Activated B cell treated with CpG ODN at 0.5 μM for 24 hours (primary cell): ENCODE measurements at regions of chr3 and their contacts with region 1.

Region 1: GRCh38 chr3:157088601-157089454 is 71.1 kb downstream of the CCNL1 start:
- DNase-seq: peak; percentile 92
- ATAC-seq: peak; percentile 92
- H3K4me3 Mint-ChIP-seq: peak overlapping the region; percentile 90
- H3K27ac Mint-ChIP-seq: peak overlapping the region; percentile 90
- H3K4me1 Mint-ChIP-seq: peaks cover 26% of the 10 kb centered on the region
- H3K27me3 Mint-ChIP-seq: peaks cover 1% of the 10 kb centered on the region
- CTCF ChIP-seq: no peak

Region 2: DNA sequence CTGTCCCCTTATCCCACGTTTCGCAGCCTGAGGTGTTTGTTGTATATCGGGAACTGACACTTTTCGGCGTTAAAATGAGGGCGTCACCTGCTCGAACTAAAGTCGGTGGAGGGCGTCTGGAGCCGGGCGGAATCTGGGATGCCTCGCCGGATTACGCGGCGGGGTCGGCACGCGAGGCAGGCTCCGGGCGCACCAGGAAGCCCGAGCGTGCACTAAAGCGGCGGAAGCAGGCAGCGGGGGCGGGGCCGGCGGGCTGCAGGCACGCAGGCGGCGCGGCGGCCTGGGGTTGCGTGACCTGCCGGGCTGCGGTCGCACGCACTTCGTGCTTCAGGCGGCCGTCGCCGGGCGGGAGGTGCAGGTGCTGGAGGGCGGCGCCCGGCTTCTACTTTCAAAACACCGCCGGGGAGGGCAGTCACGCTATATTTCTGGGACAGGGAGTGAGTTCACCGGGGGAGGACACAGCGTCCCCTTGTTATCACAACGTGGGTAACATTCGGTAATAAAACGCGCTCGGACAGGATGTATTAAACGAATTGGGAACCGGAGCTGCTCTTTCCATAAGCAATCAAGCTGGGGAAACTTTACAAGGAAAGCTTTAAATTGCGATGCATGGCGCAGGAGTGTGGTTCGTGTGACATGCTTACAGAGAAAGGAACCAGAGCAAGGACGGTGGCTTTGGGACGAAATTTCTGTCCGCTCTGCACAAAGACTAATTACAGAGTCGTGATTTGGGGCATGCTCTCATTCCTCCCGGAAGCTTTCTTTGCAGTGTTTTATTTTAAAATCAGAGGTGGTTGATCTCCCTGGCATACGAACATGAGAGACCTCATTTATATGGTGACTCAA is 271.8 kb before region 1 on chr3:
- CTCF ChIA-PET with region 1: no interaction called
- POLR2A ChIA-PET with region 1: interaction called, 31 read pairs
- intact Hi-C with region 1: loop called (anchors 1 kb)
- DNase-seq: peak; percentile 93
- ATAC-seq: peak; percentile 83
- H3K4me3 Mint-ChIP-seq: peak overlapping the region; percentile 94
- H3K27ac Mint-ChIP-seq: peak overlapping the region; percentile 99
- H3K4me1 Mint-ChIP-seq: peaks cover 42% of the 10 kb centered on the region
- H3K27me3 Mint-ChIP-seq: no peaks in the 10 kb centered on the region
- CTCF ChIP-seq: no peak

Region 3: DNA sequence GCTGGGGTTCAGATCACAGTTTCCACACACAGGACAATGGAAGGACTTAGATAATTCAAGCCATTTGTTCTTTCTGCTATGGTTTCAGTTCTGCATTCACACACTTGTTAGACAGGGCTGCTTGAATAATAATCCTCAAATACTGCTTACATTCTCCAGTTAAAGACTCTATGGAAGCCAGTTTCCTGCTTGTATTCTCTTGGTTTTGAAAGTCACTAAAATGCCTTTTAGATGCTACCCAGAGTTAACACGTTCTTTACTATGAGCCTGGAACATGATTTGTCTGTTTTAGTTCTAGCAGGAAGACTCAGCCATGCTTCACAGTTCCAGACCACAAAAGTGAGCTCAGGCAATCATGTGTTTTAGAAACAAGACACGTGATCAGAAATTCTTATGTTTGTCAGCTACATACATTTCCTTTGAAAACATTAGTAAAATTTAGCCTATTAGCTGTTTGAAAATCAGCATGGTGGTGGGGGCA is 110.3 kb before region 1 on chr3:
- CTCF ChIA-PET with region 1: interaction called, 5 read pairs
- POLR2A ChIA-PET with region 1: interaction called, 9 read pairs
- intact Hi-C with region 1: loop called (anchors 1 kb)
- DNase-seq: no peak
- ATAC-seq: peak; percentile 90
- H3K4me3 Mint-ChIP-seq: peak overlapping the region; percentile 61
- H3K27ac Mint-ChIP-seq: peak overlapping the region; percentile 95
- H3K4me1 Mint-ChIP-seq: peaks cover 51% of the 10 kb centered on the region
- H3K27me3 Mint-ChIP-seq: no peaks in the 10 kb centered on the region
- CTCF ChIP-seq: no peak

Region 4: DNA sequence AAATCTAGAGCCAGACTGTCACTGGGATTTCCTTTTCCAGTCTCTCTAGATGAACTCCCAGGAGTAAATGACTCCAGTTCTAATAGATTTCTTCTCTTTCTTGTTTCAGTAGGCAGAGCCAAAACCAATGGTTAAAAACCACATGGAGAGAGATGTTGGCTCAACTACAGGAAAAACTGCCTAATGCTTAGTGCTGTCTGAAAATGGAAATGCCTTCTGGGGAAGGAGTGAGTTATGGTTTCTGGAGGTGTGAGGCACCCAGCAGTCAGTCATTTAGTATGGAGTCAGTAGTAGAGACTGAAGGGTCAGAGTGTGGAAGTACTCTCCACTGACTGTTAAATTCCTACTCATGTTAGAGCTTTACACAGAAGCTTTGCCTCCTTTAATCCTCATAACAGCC is 65.6 kb before region 1 on chr3:
- CTCF ChIA-PET with region 1: no interaction called
- POLR2A ChIA-PET with region 1: no interaction called
- intact Hi-C with region 1: no loop called
- DNase-seq: no peak
- ATAC-seq: no peak
- H3K4me3 Mint-ChIP-seq: no peak overlapping the region
- H3K27ac Mint-ChIP-seq: no peak overlapping the region
- H3K4me1 Mint-ChIP-seq: peaks cover 3% of the 10 kb centered on the region
- H3K27me3 Mint-ChIP-seq: no peaks in the 10 kb centered on the region
- CTCF ChIP-seq: no peak

Region 5: DNA sequence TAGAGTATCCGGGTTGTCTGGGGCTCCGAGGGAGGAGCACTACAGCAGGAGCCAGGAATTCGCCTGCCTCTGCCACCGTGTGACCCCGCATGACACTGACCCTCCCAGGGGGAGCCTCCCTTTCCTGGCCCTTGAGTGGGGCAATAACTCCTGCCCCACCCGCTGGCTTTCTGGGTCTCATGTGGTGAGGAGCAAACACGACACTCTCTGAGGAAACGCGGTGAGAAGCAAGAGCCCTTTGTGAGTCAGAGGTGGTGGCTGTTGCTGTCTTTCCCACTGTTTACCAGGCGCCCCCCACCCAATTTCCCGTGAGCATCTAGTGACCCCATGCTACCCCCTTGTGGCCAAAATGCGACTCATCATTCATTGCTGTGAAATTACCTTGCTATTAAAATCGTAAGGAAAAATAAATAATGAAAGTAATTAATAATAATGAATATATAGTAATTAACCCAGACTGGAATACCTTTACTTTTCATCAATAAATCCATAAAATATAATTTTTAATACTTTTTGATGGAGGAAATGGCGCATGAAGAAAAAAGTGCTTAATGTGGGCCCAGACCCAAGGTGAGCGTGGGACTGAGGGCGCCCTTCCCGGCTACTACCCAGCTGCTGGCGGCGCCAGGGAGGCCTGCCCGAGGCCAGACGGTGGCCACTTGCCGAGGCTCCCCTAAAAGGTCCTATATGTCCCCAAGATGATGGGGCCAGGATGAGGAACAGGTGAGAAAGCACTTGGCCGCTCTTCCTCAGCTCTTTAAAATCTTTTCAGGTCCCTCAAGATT is 41.8 kb after region 1 on chr3:
- CTCF ChIA-PET with region 1: interaction called, 29 read pairs
- POLR2A ChIA-PET with region 1: interaction called, 5 read pairs
- intact Hi-C with region 1: loop called (anchors 1 kb)
- DNase-seq: no peak
- ATAC-seq: peak; percentile 37
- H3K4me3 Mint-ChIP-seq: no peak overlapping the region
- H3K27ac Mint-ChIP-seq: no peak overlapping the region
- H3K4me1 Mint-ChIP-seq: peaks cover 23% of the 10 kb centered on the region
- H3K27me3 Mint-ChIP-seq: no peaks in the 10 kb centered on the region
- CTCF ChIP-seq: no peak

Region 6: GRCh38 chr3:157239082-157239704 is 150.4 kb after region 1 on chr3:
- CTCF ChIA-PET with region 1: no interaction called
- POLR2A ChIA-PET with region 1: no interaction called
- intact Hi-C with region 1: loop called (anchors 5 kb)
- DNase-seq: peak; percentile 18
- ATAC-seq: peak; percentile 91
- H3K4me3 Mint-ChIP-seq: no peak overlapping the region
- H3K27ac Mint-ChIP-seq: no peak overlapping the region
- H3K4me1 Mint-ChIP-seq: peaks cover 2% of the 10 kb centered on the region
- H3K27me3 Mint-ChIP-seq: no peaks in the 10 kb centered on the region
- CTCF ChIP-seq: peak; percentile 60